ENCODE measurements at regions of chr2 and their contacts with region 1.

Region 1: GRCh38 chr2:68302281-68302875 is 17.4 kb downstream of the CNRIP1 start:
- DNase-seq: no peak
- H3K4me3 ChIP-seq: no peak overlapping the region
- H3K27me3 ChIP-seq: no peaks in the 10 kb centered on the region
- CTCF ChIP-seq: no peak

Region 2: DNA sequence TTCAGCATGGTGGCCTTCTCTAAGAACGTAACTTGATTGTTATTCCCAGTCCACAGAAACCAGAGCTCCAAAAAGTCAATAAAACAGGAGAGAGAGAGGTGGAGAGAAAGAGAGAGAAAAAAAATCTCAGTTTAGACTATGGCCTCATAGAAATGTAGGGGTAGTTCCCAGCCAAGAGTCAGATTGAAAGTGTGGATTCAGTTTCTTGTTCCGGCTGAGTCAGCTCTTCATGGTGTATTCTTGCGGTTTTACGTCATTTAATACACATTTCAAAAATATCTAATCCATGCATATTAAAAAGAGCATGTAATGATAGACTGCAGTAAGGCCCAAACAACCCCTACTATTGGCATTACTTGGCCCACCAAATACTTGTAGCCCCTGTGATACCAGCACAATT is 601.4 kb before region 1 on chr2:
- CTCF ChIA-PET with region 1: no interaction called
- POLR2A ChIA-PET with region 1: interaction called, 10 read pairs
- DNase-seq: no peak
- H3K4me3 ChIP-seq: no peak overlapping the region
- H3K27me3 ChIP-seq: no peaks in the 10 kb centered on the region
- CTCF ChIP-seq: no peak

Region 3: DNA sequence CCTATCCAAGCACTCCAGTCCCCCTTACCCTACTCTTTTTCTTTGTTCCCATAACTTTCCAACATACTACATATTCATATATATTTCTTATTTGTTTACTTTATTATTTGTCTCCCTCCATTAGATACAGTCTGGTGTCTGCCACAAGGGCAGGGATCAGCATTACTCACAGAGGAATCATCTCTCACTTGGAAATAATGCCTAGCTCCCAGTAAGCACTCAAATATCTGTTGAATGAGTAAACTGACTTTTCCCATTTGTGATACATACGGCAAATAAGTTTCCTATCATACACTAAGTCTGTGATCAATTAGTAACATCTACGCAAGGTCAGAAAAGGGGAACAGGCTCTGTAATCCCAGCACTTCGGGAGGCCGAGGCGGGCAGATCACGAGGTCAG is 258.3 kb before region 1 on chr2:
- CTCF ChIA-PET with region 1: no interaction called
- POLR2A ChIA-PET with region 1: no interaction called
- DNase-seq: peak; percentile 78
- H3K4me3 ChIP-seq: no peak overlapping the region
- H3K27me3 ChIP-seq: no peaks in the 10 kb centered on the region
- CTCF ChIP-seq: no peak

Region 4: GRCh38 chr2:68290901-68291300 is 11.5 kb before region 1 on chr2:
- CTCF ChIA-PET with region 1: interaction called, 13 read pairs
- POLR2A ChIA-PET with region 1: no interaction called
- DNase-seq: no peak
- H3K4me3 ChIP-seq: no peak overlapping the region
- H3K27me3 ChIP-seq: no peaks in the 10 kb centered on the region
- CTCF ChIP-seq: no peak

Region 5: GRCh38 chr2:69804416-69804815 is 1502.0 kb after region 1 on chr2:
- CTCF ChIA-PET with region 1: no interaction called
- POLR2A ChIA-PET with region 1: interaction called, 10 read pairs
- DNase-seq: no peak
- H3K4me3 ChIP-seq: no peak overlapping the region
- H3K27me3 ChIP-seq: no peaks in the 10 kb centered on the region
- CTCF ChIP-seq: no peak